ENCODE measurements at regions of chr2 and their contacts with region 1.

Region 1: GRCh38 chr2:37397166-37397565 is 52.7 kb downstream of the QPCT start:
- DNase-seq: no peak
- H3K4me3 ChIP-seq: no peak overlapping the region
- H3K27ac ChIP-seq: no peak overlapping the region
- H3K27me3 ChIP-seq: no peaks in the 10 kb centered on the region
- CTCF ChIP-seq: no peak

Region 2: DNA sequence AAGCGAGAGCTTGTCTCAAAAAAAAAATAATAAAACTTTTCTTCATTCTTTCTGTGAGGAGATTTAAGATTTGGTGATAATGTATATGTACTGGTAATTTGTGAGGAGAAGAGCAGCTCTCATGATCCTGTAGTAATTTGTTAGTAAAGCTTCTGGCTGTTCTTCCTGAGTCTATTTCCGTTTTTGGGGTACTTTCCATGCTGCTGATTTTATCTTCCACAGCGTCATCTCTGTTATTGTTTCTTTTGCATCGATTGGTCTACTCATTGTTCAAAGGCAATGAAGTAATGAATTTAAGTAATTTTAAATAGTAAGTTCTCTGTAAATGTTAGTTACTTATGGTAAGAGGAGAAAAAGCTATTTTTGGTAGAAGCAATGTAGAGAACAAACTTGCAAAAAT is 153.7 kb before region 1 on chr2:
- CTCF ChIA-PET with region 1: no interaction called
- POLR2A ChIA-PET with region 1: no interaction called
- DNase-seq: no peak
- H3K4me3 ChIP-seq: no peak overlapping the region
- H3K27ac ChIP-seq: no peak overlapping the region
- H3K27me3 ChIP-seq: no peaks in the 10 kb centered on the region
- CTCF ChIP-seq: no peak

Region 3: GRCh38 chr2:38115216-38116032 is 718.3 kb after region 1 on chr2:
- CTCF ChIA-PET with region 1: interaction called, 11 read pairs
- POLR2A ChIA-PET with region 1: no interaction called
- DNase-seq: no peak
- H3K4me3 ChIP-seq: no peak overlapping the region
- H3K27ac ChIP-seq: no peak overlapping the region
- H3K27me3 ChIP-seq: peaks cover 2% of the 10 kb centered on the region
- CTCF ChIP-seq: peak; percentile 98

Measured in AG04450 (cell line).